Dendritic cell treated with granulocyte-macrophage colony-stimulating factor and Interleukin-4, amounts not matched to agents 40 ng/mL and 50 ng/mL, for 4 days (primary cell): ENCODE measurements at regions of chr10 and their contacts with region 1.

Region 1: GRCh38 chr10:43606322-43607198 is at the start of gene ZNF485:
- H3K4me3 Mint-ChIP-seq: peak within 1 kb of the TSS; percentile 76
- H3K27ac Mint-ChIP-seq: peak within 1 kb of the TSS; percentile 75
- H3K4me1 Mint-ChIP-seq: peaks cover 23% of the 10 kb centered on the region
- H3K27me3 Mint-ChIP-seq: peaks cover 3% of the 10 kb centered on the region

Region 2: GRCh38 chr10:43048574-43049339 is 557.8 kb before region 1 on chr10:
- intact Hi-C with region 1: no loop called
- H3K4me3 Mint-ChIP-seq: no peak overlapping the region
- H3K27ac Mint-ChIP-seq: no peak overlapping the region
- H3K4me1 Mint-ChIP-seq: no peaks in the 10 kb centered on the region
- H3K27me3 Mint-ChIP-seq: peaks cover 9% of the 10 kb centered on the region

Region 3: GRCh38 chr10:43648398-43649184 is 42.0 kb after region 1 on chr10 and contains the start of gene ZNF32:
- intact Hi-C with region 1: loop called (anchors 2 kb)
- H3K4me3 Mint-ChIP-seq: peak within 1 kb of the TSS; percentile 84
- H3K27ac Mint-ChIP-seq: peak within 1 kb of the TSS; percentile 72
- H3K4me1 Mint-ChIP-seq: peaks cover 8% of the 10 kb centered on the region
- H3K27me3 Mint-ChIP-seq: peaks cover 17% of the 10 kb centered on the region